Activated CD8-positive, alpha-beta T cell treated with anti-CD3 and anti-CD28 coated beads, Interleukin-2, amount 10 ng/mL, durations not matched to agents 7 days and 5 days (primary cell): ENCODE measurements at regions of chr19 and their contacts with region 1.

Region 1: GRCh38 chr19:47243776-47244547 is 12.4 kb upstream of the CCDC9 start:
- DNase-seq: peak; percentile 95
- ATAC-seq: peak; percentile 83
- H3K4me3 Mint-ChIP-seq: peak overlapping the region; percentile 66
- H3K27ac Mint-ChIP-seq: peak overlapping the region; percentile 92
- H3K4me1 Mint-ChIP-seq: peaks cover 42% of the 10 kb centered on the region
- H3K27me3 Mint-ChIP-seq: no peaks in the 10 kb centered on the region

Region 2: DNA sequence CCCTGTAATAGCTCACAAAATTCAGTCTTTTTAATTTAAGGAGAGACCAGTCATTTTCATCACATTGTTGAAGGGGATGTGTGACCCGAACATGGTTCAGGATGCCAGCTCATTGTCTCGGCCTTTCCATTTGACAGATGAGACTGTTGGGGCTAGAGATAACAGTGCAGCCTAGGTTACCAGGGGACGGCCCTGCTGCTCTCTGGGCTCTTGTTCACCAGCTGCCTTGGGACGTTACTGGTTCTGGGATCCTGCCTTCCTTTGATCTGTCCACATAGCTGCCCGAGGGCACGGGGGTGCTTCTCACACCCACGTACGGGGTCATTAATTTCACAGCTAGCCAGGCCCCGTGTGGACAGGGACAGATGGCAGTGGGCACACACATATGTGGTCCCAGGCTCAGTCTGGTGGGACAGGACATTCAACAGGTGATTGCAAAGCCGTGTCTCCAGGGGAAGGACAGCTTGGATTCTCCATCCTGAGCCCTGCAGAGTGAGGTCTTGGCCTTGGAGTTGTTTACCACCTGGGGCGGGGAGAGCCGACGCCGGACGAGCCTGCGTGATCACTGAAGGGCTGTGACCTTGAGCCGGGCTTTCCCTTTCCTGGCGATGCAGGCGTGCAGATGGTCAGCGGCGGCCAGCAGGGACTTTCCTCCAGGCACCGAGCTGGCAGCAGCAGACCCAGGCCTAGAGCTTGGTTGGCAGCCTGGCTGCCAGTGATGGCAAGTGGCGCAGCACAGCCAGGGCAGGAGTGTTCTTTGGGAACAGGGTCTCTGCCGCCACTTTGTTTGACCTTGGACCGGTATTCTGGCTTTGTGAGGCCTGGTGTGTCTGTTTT is 251.0 kb before region 1 on chr19:
- CTCF ChIA-PET with region 1: no interaction called
- POLR2A ChIA-PET with region 1: no interaction called
- DNase-seq: no peak
- ATAC-seq: no peak
- H3K4me3 Mint-ChIP-seq: no peak overlapping the region
- H3K27ac Mint-ChIP-seq: no peak overlapping the region
- H3K4me1 Mint-ChIP-seq: peaks cover 15% of the 10 kb centered on the region
- H3K27me3 Mint-ChIP-seq: no peaks in the 10 kb centered on the region

Region 3: GRCh38 chr19:47112997-47113849 is 130.7 kb before region 1 on chr19 and contains the start of gene ZC3H4:
- CTCF ChIA-PET with region 1: interaction called, 20 read pairs
- POLR2A ChIA-PET with region 1: interaction called, 3 read pairs
- DNase-seq: peak; percentile 100
- ATAC-seq: peak; percentile 86
- H3K4me3 Mint-ChIP-seq: peak within 1 kb of the TSS; percentile 95
- H3K27ac Mint-ChIP-seq: peak within 1 kb of the TSS; percentile 100
- H3K4me1 Mint-ChIP-seq: peaks cover 29% of the 10 kb centered on the region
- H3K27me3 Mint-ChIP-seq: no peaks in the 10 kb centered on the region
- total RNA-seq, gene ZC3H4: 102 TPM

Region 4: DNA sequence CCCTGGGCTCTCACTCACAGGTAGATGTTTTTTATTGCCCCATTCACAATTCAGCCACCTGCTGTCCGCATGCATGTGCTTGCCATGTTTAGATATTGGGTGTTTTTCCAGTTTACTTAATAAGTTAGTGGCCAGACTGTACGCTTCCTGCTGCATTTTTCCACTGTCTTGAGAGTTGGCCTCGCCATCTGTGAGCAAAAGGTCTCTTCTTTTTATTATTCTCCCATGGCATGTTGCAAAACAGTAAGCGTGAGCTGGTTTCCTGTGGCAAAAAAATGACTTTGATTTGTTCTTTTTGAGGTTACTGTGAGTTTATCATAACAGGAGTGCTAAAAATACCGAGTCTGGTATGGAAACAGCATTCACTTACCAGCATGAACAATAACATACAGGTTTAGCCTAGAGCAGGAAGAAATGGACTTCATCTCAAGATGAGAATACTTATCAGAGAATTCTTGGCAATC is 67.3 kb before region 1 on chr19:
- CTCF ChIA-PET with region 1: interaction called, 14 read pairs
- POLR2A ChIA-PET with region 1: no interaction called
- DNase-seq: peak; percentile 41
- ATAC-seq: peak; percentile 73
- H3K4me3 Mint-ChIP-seq: peak overlapping the region; percentile 17
- H3K27ac Mint-ChIP-seq: peak overlapping the region; percentile 74
- H3K4me1 Mint-ChIP-seq: peaks cover 54% of the 10 kb centered on the region
- H3K27me3 Mint-ChIP-seq: no peaks in the 10 kb centered on the region

Region 5: DNA sequence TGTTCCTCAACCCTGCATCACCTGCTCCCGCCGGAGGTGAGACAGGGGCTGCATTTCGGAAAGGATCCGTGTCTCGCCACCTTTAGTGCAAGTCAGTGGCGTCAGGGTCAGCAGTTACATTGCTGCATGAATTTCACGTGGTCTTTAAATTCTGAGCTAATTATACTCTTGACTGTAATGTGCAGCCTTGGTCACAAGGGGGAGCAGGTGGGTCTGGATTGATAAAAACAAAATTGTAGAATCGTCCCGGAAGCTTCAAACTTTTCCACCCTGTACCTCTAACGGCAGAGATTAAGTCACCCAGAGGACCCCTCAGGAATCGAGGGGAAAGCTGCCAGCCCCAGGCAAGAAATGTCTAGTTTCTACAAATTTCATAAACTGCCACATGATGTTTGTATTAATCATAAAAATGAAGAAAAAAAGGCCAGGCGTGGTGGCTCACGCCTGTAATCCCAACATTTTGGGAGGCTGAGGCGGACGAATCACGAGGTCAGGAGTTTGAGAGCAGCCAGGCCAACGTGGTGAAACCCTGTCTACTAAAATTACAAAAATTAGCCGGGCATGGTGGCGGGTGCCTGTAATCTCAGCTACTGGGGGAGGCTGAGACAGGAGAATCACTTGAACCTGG is 33.2 kb before region 1 on chr19:
- CTCF ChIA-PET with region 1: interaction called, 484 read pairs
- POLR2A ChIA-PET with region 1: interaction called, 39 read pairs
- DNase-seq: peak; percentile 90
- ATAC-seq: peak; percentile 79
- H3K4me3 Mint-ChIP-seq: no peak overlapping the region
- H3K27ac Mint-ChIP-seq: peak overlapping the region; percentile 91
- H3K4me1 Mint-ChIP-seq: peaks cover 19% of the 10 kb centered on the region
- H3K27me3 Mint-ChIP-seq: no peaks in the 10 kb centered on the region

Region 6: DNA sequence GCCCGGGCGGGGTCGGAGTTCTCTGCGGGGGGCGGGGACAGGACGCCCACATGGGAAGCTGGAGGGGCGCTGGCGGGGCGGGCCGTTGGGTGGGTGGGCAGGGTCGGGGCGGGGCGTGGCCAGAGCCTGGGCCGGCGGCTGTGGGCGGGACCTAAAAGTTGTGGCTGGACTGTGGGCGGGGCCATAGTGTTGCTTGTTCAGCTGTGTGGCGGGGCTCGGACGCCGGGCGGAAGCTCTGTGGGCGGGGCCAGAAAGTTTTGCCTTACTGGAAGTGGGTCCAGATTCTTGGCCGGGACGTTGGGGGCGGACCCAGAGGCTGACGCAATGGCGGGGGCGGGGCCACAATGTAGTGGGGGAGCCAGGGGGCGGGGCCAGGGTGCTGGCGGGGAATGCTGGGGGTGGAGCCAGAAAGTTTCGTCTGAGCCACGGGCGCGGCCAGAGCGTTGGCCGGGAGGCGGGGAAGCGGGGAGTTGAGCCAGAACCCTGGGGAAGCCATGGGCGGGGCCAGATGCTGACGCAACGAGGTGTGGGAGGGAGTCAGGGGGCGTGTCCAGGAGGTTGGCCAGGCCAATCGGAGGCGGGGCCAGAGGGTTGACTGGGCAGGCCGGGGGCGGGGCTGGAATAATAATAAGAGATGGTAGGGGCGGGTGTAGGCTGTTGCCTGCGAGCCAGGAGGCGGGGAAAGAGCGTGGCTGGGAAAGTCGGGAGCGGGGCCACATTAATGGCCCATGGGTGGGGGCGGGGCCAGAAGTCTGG is 12.9 kb after region 1 on chr19:
- CTCF ChIA-PET with region 1: interaction called, 76 read pairs
- POLR2A ChIA-PET with region 1: interaction called, 21 read pairs
- DNase-seq: peak; percentile 100
- ATAC-seq: peak; percentile 88
- H3K4me3 Mint-ChIP-seq: peak overlapping the region; percentile 87
- H3K27ac Mint-ChIP-seq: peak overlapping the region; percentile 97
- H3K4me1 Mint-ChIP-seq: peaks cover 43% of the 10 kb centered on the region
- H3K27me3 Mint-ChIP-seq: no peaks in the 10 kb centered on the region

Region 7: DNA sequence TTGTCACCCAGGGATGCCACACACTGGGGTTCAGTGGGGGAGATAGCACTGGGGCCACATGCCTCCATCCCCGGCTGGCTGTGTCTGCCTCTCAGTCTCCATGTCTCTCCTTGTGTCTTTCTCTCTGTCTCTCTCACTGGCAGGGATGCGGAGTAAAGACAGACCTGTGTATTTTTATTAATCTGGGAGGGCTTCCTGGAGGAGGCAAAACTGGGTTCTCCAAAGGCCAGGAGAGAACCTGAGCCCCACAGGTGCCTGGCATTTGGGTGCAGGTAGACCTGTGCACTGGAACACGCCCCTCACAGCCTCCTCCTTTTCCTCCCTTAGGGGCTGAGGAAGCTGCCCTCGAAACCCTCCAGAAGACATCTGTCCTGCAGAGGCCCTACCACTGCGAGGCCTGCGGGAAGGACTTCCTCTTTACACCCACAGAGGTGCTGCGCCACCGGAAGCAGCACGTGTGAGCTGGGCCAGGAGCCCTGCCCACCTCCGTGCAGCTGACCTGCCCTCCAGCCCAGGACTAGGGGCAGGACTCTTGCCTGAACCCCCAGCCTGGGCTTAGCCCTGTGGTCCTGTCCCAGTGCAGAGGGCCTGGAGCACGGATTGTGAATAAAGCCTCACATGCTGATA is 137.8 kb after region 1 on chr19:
- CTCF ChIA-PET with region 1: no interaction called
- POLR2A ChIA-PET with region 1: no interaction called
- DNase-seq: peak; percentile 63
- ATAC-seq: peak; percentile 73
- H3K4me3 Mint-ChIP-seq: no peak overlapping the region
- H3K27ac Mint-ChIP-seq: peak overlapping the region; percentile 68
- H3K4me1 Mint-ChIP-seq: peaks cover 30% of the 10 kb centered on the region
- H3K27me3 Mint-ChIP-seq: no peaks in the 10 kb centered on the region